ENCODE measurements at regions of chr1 and their contacts with region 1.

Region 1: DNA sequence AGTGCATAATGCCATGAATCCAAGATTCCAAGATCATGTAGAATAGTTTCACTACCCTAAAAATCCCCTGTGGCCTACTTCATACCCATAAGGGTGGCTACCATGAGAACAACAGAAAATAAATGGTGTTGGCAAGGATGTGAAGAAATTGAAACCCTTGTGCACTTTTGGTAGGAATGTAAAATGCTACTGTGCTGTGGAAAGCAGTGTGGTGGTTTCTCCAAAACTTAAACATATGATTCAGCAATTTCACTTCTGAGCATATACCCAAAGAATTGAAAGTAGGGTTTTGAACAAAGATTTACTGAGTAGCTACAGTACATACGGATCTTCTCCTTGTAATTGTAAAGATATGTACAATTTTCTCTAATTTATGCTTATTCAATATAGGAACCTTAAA is 16.0 kb downstream of the FNBP1L start:
- DNase-seq: no peak
- ATAC-seq: no peak

Region 2: DNA sequence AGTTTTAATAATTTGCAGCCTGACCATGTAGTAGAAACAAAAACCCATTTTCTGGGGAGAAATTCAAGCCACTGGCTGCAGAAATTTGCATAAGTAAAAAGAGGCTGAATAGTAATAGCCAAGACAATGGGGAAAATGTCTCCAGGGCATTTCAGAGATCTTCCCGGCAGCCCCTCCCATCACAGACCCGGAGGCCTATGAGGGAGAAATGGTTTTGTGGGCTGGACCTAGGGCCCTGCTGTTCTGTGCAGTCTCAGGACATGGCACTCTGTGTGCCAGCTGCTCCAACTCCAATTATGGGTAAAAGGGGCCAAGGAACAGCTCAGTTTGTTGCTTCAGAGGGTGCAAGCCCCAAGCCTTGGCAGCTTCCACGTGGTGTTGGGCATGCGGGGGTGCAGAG is 55.8 kb before region 1 on chr1:
- intact Hi-C with region 1: no loop called
- DNase-seq: no peak
- ATAC-seq: no peak

Region 3: DNA sequence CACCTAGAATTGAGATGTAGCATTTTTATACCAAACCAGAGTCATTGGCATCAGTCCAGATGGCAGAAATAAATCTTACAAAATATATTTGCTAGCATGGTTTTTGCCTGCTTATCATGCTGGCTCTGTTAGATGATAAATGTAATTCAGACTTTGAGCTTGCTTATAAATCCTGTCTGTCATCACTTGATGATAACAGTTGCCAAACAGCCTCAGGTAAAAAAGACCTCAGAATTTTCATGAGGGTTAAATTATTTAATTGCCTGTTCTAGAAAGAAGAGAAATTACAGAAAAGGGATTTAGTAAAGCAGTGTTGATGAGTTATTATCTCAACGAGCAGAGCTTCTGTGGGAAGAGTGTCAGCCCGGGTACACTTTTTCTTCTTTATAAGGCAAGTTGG is 67.2 kb after region 1 on chr1:
- intact Hi-C with region 1: loop called (anchors 5 kb)
- DNase-seq: no peak
- ATAC-seq: no peak